Tibial artery (tissue), 4 donors: ENCODE measurements at regions of chr11 and their contacts with region 1.

Region 1: DNA sequence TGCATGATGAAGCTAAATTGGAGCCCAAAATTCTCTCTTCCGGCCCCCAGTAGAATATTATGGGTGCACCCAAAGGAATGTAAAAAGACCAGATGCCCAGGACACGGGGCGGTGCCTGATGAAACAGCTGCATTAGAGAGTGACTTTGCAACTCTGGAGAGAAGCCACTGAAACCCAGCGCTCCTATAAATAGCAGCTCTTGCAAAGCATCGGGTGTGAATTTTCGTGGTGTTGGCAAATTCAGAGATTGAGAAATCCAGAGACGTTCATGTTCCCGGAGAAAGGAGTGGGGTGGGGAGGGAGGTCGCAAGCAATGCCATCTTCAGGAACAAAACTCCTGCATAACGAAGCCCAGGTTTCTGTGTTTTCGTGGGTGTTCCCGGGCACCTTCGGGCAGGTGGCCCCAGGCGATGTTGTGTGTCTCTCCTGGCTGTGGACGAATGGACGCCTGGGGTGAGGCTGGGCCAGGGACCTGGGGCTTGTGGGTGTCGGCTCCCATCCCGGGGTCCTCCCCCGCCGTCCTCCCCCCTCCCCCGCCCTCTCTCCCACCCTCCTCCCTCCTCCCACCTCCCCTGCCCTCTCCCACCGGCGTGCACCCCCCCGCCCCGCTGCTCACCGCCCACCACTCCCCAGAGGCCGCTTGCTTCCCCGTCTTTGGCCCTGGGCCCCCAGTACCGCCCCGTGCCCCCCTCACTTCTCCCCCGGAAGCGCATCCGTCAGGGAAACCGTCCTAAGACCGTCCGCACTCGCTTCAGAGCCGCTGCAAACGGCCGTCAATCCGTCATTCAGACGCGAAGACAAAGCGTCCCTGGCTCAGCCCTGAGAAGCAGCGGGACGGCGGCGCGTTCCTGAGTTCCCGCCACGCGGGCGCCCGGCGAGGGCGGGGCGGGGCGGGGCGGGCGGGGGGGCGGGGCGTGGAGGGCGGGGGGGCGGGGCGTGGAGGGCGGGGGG is 26.7 kb upstream of the TOLLIP start:
- DNase-seq: peak; percentile 91 to 93
- H3K4me3 ChIP-seq: peak overlapping the region; percentile 64 to 76
- H3K27ac ChIP-seq: peak overlapping the region; percentile 94 to 95
- H3K4me1 ChIP-seq: peaks cover 0 to 20% (median 12%) of the 10 kb centered on the region in 4 donors
- H3K27me3 ChIP-seq: no peaks in the 10 kb centered on the region
- CTCF ChIP-seq: no peak

Region 2: DNA sequence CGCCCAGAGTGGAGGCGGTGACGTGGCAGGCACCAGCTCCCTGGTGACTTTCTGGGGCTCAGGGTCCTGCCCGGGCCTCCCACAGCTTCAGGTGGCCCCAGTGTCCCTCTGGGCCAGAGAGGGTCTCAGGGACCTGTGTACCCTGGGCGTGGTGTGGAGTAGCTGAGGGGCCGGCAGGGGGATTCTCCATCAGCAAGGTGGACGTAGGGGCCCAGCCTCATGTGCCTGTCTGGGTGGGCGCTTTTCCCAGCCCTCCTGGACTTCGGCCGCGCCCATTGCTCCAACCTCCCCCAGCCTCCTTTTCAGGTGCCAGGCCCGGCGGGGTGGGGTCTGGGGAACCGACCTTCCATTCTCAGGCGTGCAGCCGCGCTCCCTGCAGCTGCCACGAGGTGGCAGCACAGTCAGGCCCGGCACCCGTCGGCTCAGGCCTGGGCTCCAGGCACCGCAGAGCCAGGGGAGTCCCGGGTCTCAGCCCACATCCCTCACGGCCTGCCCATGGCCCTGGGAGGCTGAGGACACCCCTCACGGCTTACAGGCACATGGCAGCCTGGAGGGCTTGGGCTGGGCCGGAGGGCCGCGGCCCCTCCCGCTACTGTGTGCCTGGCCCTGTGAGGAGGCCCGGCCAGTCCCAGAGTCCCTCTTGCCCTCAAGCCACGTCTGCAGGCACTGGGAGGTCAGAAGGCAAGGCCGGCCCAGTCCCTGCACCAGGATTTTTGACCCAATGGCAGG is 133.1 kb before region 1 on chr11:
- intact Hi-C with region 1: no loop called
- DNase-seq: peak; percentile 33 to 73
- H3K4me3 ChIP-seq: no peak overlapping the region
- H3K27ac ChIP-seq: no peak overlapping the region
- H3K4me1 ChIP-seq: peaks cover 0 to 19% (median 3%) of the 10 kb centered on the region in 4 donors
- H3K27me3 ChIP-seq: peaks cover 0 to 70% of the 10 kb centered on the region in 2 donors
- CTCF ChIP-seq: peak; percentile 79 to 93

Region 3: DNA sequence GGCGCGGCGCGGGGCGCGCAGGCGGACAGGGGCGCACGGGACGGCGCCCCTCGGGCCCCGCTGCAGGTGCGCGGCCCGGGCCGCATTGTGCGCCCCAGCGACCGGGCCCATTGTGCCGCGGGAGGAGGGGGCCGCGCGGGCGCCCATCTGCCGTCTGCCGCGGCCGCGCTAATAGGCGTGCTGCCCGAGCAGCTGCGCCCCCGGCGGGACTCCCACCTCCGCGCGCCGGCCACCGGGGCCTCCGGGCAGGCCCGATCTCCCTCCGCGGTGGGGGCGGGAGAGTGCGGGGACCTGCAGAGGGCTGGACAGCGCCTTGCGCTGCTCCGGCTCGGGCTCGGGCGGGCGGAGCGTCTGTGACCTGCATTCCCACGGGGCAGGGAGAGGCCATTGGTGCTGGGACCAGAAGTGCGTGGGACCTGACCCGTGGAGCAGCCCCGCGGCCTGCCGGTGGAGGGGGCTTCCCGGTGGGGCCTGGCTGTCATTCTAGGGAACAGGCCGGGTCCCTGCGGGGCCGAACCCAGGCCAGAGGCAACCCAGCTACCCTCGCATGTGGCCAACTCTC is 54.6 kb after region 1 on chr11:
- intact Hi-C with region 1: loop called (anchors 5 kb)
- DNase-seq: no peak
- H3K4me3 ChIP-seq: no peak overlapping the region
- H3K27ac ChIP-seq: no peak overlapping the region
- H3K4me1 ChIP-seq: peaks cover 0 to 19% (median 17%) of the 10 kb centered on the region in 4 donors
- H3K27me3 ChIP-seq: peaks cover 0 to 48% of the 10 kb centered on the region in 2 donors
- CTCF ChIP-seq: no peak